Activated naive CD8-positive, alpha-beta T cell treated with anti-CD3 and anti-CD28 coated beads, Interleukin-2, amount 10 ng/mL, durations not matched to agents 7 days and 5 days (primary cell): ENCODE measurements at regions of chr15 and their contacts with region 1.

Region 1: GRCh38 chr15:63504247-63504978 is at the start of gene USP3:
- DNase-seq: peak; percentile 95
- ATAC-seq: peak; percentile 60
- H3K4me3 Mint-ChIP-seq: peak within 1 kb of the TSS; percentile 96
- H3K27ac Mint-ChIP-seq: peak within 1 kb of the TSS; percentile 92
- H3K4me1 Mint-ChIP-seq: peaks cover 57% of the 10 kb centered on the region
- H3K27me3 Mint-ChIP-seq: no peaks in the 10 kb centered on the region
- total RNA-seq, gene USP3: 75.6 to 83.1 TPM

Region 2: DNA sequence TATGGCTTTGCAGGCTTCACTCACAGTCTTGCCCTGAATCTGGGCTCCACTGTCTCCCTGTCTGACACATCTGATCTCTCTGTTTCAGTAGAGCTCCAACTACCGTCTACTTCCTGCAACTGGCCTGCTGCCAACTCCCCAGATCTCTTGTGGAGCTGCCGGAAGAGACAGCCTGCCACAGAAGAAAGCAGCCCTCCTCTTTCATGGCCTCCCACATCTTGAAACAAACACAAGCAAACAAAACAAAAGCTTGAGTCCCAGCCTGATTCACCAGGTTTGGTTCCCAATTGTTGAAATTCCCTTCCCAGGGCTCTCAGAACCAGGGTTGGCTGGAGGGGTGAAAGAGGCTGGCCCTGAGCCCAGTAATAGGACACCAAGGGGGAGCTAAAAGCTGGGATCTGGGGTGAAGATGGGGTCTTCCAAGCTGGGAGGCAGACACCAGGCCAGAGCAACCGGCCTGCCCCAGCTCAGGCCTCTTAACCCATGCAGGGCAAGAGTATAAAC is 67.5 kb before region 1 on chr15:
- POLR2A ChIA-PET with region 1: interaction called, 11 read pairs
- DNase-seq: peak; percentile 75
- ATAC-seq: peak; percentile 99
- H3K4me3 Mint-ChIP-seq: peak overlapping the region; percentile 39
- H3K27ac Mint-ChIP-seq: peak overlapping the region; percentile 93
- H3K4me1 Mint-ChIP-seq: peaks cover 21% of the 10 kb centered on the region
- H3K27me3 Mint-ChIP-seq: no peaks in the 10 kb centered on the region

Region 3: DNA sequence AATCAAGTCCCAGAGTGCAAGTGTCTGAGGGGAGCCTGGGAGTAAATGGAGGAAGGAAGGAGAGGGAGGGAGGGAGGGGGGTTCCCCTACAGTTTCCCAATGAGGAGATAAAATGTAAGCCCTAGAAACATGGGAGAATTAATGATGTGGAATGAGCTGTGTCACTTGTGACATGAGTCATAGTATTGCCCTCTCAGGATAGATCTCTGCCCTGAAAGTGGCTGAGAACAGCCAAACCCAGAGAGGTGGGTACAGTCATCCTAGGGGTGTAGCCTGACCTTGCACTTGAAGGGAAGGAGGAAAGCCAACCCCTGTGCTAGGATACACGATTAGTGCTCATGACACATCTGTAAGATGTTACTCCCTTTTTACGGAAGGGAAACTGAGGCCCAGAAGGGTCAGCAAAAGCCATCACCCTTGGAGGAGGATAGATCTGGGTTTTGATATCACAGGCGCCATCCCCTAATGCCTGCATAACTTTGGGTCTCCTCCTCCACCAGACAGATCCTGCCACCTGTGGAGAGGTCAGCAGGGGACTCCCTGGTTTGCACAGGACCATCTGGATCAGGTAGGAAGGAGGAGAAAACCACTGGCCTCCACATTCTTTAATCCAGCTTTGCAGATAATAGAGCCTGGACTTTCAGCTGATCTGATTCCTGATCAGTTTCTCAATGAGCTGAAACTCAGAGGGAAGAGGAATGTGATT is 23.2 kb before region 1 on chr15:
- POLR2A ChIA-PET with region 1: interaction called, 26 read pairs
- DNase-seq: no peak
- ATAC-seq: no peak
- H3K4me3 Mint-ChIP-seq: no peak overlapping the region
- H3K27ac Mint-ChIP-seq: no peak overlapping the region
- H3K4me1 Mint-ChIP-seq: peaks cover 44% of the 10 kb centered on the region
- H3K27me3 Mint-ChIP-seq: no peaks in the 10 kb centered on the region

Region 4: DNA sequence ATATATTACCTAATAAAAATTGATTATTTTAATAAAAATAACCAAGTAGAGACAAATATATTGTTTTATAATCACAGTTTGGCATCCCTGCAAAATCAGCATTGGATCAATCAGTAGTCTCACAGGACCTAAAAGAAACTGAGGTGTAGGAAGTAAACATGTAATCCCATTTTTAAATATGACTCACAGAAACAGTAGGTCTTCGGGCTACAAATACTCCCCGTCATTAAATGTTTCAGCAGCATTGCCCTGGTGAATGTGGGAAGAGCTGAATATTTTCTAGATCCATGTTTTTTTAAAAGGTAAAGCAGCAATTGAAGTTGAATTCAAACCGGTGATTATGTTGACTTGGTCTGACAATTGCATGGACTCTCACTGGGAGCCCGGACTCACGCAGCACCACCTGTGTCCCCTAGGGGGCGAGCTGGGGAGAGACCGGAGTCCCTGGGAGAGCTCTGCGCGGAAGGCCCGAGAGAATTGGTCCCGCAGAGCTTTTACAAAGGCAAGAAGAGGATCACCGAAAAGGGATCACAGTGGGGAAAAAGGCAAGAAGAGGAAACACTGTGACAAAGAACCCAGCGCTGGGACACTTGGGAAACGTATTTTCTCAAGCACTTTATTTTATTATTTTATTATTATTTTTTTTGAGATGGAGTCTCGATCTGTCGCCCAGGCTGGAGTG is 17.2 kb before region 1 on chr15:
- POLR2A ChIA-PET with region 1: interaction called, 46 read pairs
- DNase-seq: peak; percentile 91
- ATAC-seq: peak; percentile 95
- H3K4me3 Mint-ChIP-seq: peak overlapping the region; percentile 59
- H3K27ac Mint-ChIP-seq: peak overlapping the region; percentile 63
- H3K4me1 Mint-ChIP-seq: peaks cover 38% of the 10 kb centered on the region
- H3K27me3 Mint-ChIP-seq: no peaks in the 10 kb centered on the region

Region 5: GRCh38 chr15:63514531-63514943 is 10.1 kb after region 1 on chr15:
- POLR2A ChIA-PET with region 1: interaction called, 12 read pairs
- DNase-seq: no peak
- ATAC-seq: no peak
- H3K4me3 Mint-ChIP-seq: no peak overlapping the region
- H3K27ac Mint-ChIP-seq: no peak overlapping the region
- H3K4me1 Mint-ChIP-seq: peaks cover 55% of the 10 kb centered on the region
- H3K27me3 Mint-ChIP-seq: no peaks in the 10 kb centered on the region

Region 6: GRCh38 chr15:63531586-63531985 is 27.2 kb after region 1 on chr15:
- POLR2A ChIA-PET with region 1: no interaction called
- DNase-seq: no peak
- ATAC-seq: no peak
- H3K4me3 Mint-ChIP-seq: no peak overlapping the region
- H3K27ac Mint-ChIP-seq: no peak overlapping the region
- H3K4me1 Mint-ChIP-seq: peaks cover 36% of the 10 kb centered on the region
- H3K27me3 Mint-ChIP-seq: no peaks in the 10 kb centered on the region

Region 7: DNA sequence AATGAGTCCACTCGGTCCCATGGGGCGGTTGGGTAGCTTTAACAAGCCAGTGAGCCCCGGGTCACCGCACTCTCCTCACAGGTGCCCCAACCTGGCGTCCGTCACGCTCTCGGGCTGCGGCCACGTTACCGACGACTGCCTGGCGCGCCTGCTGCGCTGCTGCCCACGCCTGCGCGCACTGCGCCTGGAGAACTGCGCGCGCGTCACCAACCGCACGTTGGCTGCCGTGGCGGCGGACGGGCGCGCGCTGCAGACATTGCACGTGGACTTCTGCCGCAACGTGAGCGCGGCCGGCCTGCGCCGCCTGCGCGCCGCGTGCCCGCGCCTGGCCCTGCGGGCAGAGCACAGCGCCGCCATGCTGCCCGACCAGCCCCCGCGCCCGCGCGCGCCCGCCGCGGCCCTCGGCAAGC is 96.2 kb after region 1 on chr15:
- POLR2A ChIA-PET with region 1: interaction called, 23 read pairs
- DNase-seq: peak; percentile 93
- ATAC-seq: peak; percentile 78
- H3K4me3 Mint-ChIP-seq: peak overlapping the region; percentile 91
- H3K27ac Mint-ChIP-seq: peak overlapping the region; percentile 87
- H3K4me1 Mint-ChIP-seq: peaks cover 29% of the 10 kb centered on the region
- H3K27me3 Mint-ChIP-seq: no peaks in the 10 kb centered on the region